ENCODE measurements at regions of chr16 and their contacts with region 1.

Region 1: DNA sequence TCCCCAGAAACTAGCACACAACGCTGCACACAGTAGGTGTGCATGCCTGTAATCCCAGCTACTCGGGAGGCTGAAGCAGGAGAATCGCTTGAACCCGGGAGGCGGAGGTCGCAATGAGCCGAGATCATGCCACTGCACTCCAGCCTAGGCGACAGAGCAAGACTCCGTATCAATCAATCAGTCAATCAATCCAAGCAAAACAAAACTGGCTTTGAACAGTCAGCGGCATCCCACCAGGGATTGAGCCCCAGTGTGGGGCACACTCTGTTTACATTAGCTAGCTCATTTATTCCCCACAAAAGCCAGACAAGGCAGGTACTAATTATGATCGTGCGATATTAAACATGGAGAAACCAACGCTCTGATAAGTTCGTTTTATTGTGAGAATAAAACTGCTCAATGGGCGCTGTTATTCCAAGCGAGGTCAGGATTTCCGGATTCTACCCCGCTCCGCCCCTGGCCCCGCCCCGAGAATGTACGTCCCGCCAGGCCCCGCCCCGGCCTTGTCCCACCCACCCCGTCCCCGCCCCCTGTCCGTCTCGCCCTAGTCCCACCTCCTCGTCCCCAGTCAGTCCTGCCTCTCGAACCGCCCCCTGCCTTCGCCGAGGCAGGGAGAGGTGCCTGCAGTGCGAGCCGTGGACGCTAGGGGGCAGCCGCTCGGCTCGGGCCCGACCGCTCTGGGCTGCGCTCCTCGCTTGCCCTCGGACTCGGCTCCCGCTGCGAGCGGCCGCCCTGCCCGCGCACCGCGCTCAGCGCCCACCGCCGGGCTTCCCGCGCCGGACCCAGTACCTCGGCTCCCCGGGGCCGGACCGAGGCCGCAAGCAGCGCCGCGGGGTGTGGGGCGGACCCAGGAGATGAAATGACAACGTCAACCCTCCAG is at the start of gene VPS4A:
- DNase-seq: peak; percentile 96 to 99 (median 97)
- ATAC-seq: peak; percentile 97
- H3K4me3 ChIP-seq: peak within 1 kb of the TSS; percentile 64
- H3K4me3 Mint-ChIP-seq: peak within 1 kb of the TSS; percentile 99
- H3K27ac ChIP-seq: peak within 1 kb of the TSS; percentile 66 to 75
- H3K27ac Mint-ChIP-seq: peak within 1 kb of the TSS; percentile 92
- H3K4me1 ChIP-seq: peaks cover 38% of the 10 kb centered on the region
- H3K4me1 Mint-ChIP-seq: peaks cover 34% of the 10 kb centered on the region
- H3K27me3 ChIP-seq: no peaks in the 10 kb centered on the region
- H3K27me3 Mint-ChIP-seq: no peaks in the 10 kb centered on the region
- CTCF ChIP-seq: peak; percentile 70
- total RNA-seq, gene VPS4A: 57.8 to 62.4 TPM

Region 2: GRCh38 chr16:67428146-67428731 is 1882.7 kb before region 1 on chr16:
- CTCF ChIA-PET with region 1: no interaction called
- POLR2A ChIA-PET with region 1: no interaction called
- intact Hi-C with region 1: no loop called
- DNase-seq: peak in 12 of 14 experiments; percentile 18 to 72 (median 42)
- ATAC-seq: peak; percentile 56
- H3K4me3 ChIP-seq: no peak overlapping the region
- H3K4me3 Mint-ChIP-seq: no peak overlapping the region
- H3K27ac ChIP-seq: no peak overlapping the region
- H3K27ac Mint-ChIP-seq: no peak overlapping the region
- H3K4me1 ChIP-seq: peaks cover 20% of the 10 kb centered on the region
- H3K4me1 Mint-ChIP-seq: peaks cover 9% of the 10 kb centered on the region
- H3K27me3 ChIP-seq: peaks cover 35 to 49% of the 10 kb centered on the region in 2 experiments
- H3K27me3 Mint-ChIP-seq: peaks cover 62% of the 10 kb centered on the region
- CTCF ChIP-seq: peak; percentile 63

Region 3: GRCh38 chr16:68448360-68448970 is 862.4 kb before region 1 on chr16 and contains the start of gene SMPD3:
- CTCF ChIA-PET with region 1: no interaction called
- POLR2A ChIA-PET with region 1: no interaction called
- intact Hi-C with region 1: loop called in 1 of 2 experiments (anchors 5 kb)
- DNase-seq: peak; percentile 95 to 99 (median 98)
- ATAC-seq: peak; percentile 98
- H3K4me3 ChIP-seq: peak within 1 kb of the TSS; percentile 58
- H3K4me3 Mint-ChIP-seq: peak within 1 kb of the TSS; percentile 77
- H3K27ac ChIP-seq: no peak within 1 kb of the TSS
- H3K27ac Mint-ChIP-seq: no peak within 1 kb of the TSS
- H3K4me1 ChIP-seq: peaks cover 44% of the 10 kb centered on the region
- H3K4me1 Mint-ChIP-seq: peaks cover 21% of the 10 kb centered on the region
- H3K27me3 ChIP-seq: peaks cover 26 to 31% of the 10 kb centered on the region in 2 experiments
- H3K27me3 Mint-ChIP-seq: peaks cover 29% of the 10 kb centered on the region
- CTCF ChIP-seq: no peak
- total RNA-seq, gene SMPD3: 0.89 to 1.1 TPM

Region 4: DNA sequence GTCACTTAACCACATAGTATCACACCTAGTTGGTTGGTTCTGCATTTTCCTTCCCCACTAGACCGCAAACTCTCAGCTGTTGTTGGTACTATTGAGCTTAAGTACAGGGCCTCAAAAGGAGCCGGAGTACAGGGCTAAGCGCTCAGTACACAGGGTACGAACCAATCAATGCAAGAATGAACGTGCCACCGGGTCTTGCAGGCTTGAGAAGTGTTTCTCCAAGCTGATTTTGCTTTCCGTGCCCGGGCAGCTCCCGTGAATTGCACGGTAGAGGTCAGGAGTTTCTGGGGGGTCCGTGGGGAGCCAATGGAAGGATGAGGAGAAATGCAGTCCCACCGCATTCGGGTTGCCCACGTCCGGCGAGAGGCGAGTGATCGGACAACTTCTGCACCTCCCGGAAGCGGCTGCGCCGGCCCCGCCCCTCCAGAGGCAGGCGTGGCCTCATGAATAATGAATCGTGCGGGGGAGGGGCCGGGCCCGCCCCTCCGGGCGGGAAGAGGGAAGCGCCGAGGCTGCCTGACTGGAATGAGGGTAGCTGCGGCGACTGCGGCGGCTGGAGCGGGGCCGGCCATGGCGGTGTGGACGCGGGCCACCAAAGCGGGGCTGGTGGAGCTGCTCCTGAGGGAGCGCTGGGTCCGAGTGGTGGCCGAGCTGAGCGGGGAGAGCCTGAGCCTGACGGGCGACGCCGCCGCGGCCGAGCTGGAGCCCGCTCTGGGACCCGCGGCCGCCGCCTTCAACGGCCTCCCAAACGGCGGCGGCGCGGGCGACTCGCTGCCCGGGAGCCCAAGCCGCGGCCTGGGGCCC is 124.0 kb before region 1 on chr16 and contains the start of gene SNTB2:
- CTCF ChIA-PET with region 1: no interaction called
- POLR2A ChIA-PET with region 1: interaction called, 3 read pairs
- intact Hi-C with region 1: loop called in 1 of 2 experiments (anchors 2 kb)
- DNase-seq: peak; percentile 56 to 89 (median 77)
- ATAC-seq: peak; percentile 76
- H3K4me3 ChIP-seq: peak within 1 kb of the TSS; percentile 81
- H3K4me3 Mint-ChIP-seq: peak within 1 kb of the TSS; percentile 98
- H3K27ac ChIP-seq: peak within 1 kb of the TSS; percentile 46 to 56
- H3K27ac Mint-ChIP-seq: peak within 1 kb of the TSS; percentile 93
- H3K4me1 ChIP-seq: peaks cover 51% of the 10 kb centered on the region
- H3K4me1 Mint-ChIP-seq: peaks cover 45% of the 10 kb centered on the region
- H3K27me3 ChIP-seq: no peaks in the 10 kb centered on the region
- H3K27me3 Mint-ChIP-seq: no peaks in the 10 kb centered on the region
- CTCF ChIP-seq: no peak
- total RNA-seq, gene SNTB2: 10.1 to 11.4 TPM

Region 5: GRCh38 chr16:69339289-69340108 is 28.6 kb after region 1 on chr16 and contains the starts of genes COG8 and NIP7:
- CTCF ChIA-PET with region 1: interaction called, 4 read pairs
- POLR2A ChIA-PET with region 1: interaction called, 5 read pairs
- intact Hi-C with region 1: loop called (anchors 1 kb)
- DNase-seq: peak; percentile 84 to 96 (median 89)
- ATAC-seq: peak; percentile 89
- H3K4me3 ChIP-seq: peak within 1 kb of the TSS; percentile 63
- H3K4me3 Mint-ChIP-seq: peak within 1 kb of the TSS; percentile 96
- H3K27ac ChIP-seq: peak within 1 kb of the TSS; percentile 79 to 80
- H3K27ac Mint-ChIP-seq: peak within 1 kb of the TSS; percentile 90
- H3K4me1 ChIP-seq: peaks cover 31% of the 10 kb centered on the region
- H3K4me1 Mint-ChIP-seq: peaks cover 61% of the 10 kb centered on the region
- H3K27me3 ChIP-seq: no peaks in the 10 kb centered on the region
- H3K27me3 Mint-ChIP-seq: no peaks in the 10 kb centered on the region
- CTCF ChIP-seq: peak; percentile 82
- total RNA-seq, gene COG8: 18.4 to 19.3 TPM
- total RNA-seq, gene NIP7: 36.7 to 38.2 TPM

Region 6: GRCh38 chr16:69565671-69566239 is 254.9 kb after region 1 on chr16 and contains the start of gene NFAT5:
- CTCF ChIA-PET with region 1: no interaction called
- POLR2A ChIA-PET with region 1: no interaction called
- intact Hi-C with region 1: loop called in 1 of 2 experiments (anchors 2 kb)
- DNase-seq: peak; percentile 71 to 95 (median 88)
- ATAC-seq: peak; percentile 80
- H3K4me3 ChIP-seq: peak within 1 kb of the TSS; percentile 84
- H3K4me3 Mint-ChIP-seq: peak within 1 kb of the TSS; percentile 100
- H3K27ac ChIP-seq: peak within 1 kb of the TSS; percentile 75 to 93
- H3K27ac Mint-ChIP-seq: peak within 1 kb of the TSS; percentile 96
- H3K4me1 ChIP-seq: peaks cover 31% of the 10 kb centered on the region
- H3K4me1 Mint-ChIP-seq: peaks cover 47% of the 10 kb centered on the region
- H3K27me3 ChIP-seq: no peaks in the 10 kb centered on the region
- H3K27me3 Mint-ChIP-seq: no peaks in the 10 kb centered on the region
- CTCF ChIP-seq: no peak
- total RNA-seq, gene NFAT5: 19.5 to 21.2 TPM